ENCODE measurements at regions of chr14 and their contacts with region 1.

Region 1: DNA sequence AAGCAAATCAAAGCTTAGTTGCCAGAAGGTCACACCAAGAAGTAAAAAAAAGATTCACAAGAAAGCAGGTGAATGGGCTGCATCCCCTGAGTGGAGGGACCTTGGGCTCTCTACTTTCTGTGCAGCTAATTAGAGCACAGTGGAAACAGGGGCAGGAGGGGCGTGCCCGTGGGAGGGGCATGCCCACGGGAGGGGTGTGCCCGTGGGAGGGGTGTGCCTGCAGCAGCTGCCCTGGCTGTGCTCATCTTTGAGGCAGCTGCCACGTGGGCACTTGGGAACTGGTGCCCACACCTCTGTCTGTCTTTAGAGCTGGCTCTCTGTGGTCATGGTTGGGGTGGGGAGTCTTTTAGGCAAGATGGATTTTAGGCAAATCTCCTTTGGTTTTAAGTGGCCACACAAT is 60.0 kb downstream of the EML1 start:
- DNase-seq: no peak
- H3K4me3 ChIP-seq: no peak overlapping the region
- H3K27ac ChIP-seq: no peak overlapping the region
- H3K4me1 ChIP-seq: no peaks in the 10 kb centered on the region
- H3K27me3 ChIP-seq: peaks cover 3% of the 10 kb centered on the region
- CTCF ChIP-seq: no peak

Region 2: DNA sequence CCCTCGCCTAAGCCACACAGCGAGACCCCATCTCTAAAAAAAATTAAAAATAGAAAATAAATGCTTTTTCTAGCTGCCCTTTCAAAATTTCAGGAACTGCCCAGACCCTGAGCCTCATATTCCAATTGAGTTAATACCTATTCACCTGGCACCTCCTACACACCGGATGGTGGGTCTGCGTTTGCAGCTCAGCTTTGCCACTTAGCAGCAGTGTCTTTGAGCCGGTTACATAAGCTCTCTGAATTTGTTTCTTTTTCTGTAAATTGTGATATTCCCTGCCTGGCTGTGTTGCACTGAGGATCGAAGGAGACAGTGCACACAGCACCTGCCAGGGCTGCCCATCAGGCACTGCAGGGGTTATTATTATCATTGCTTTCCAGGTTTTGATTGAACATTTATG is 65.6 kb after region 1 on chr14:
- CTCF ChIA-PET with region 1: no interaction called
- dilution Hi-C with region 1: loop called (anchors 5 kb)
- in situ Hi-C with region 1: no loop called
- intact Hi-C with region 1: no loop called
- DNase-seq: no peak
- H3K4me3 ChIP-seq: no peak overlapping the region
- H3K27ac ChIP-seq: no peak overlapping the region
- H3K4me1 ChIP-seq: no peaks in the 10 kb centered on the region
- H3K27me3 ChIP-seq: peaks cover 3% of the 10 kb centered on the region
- CTCF ChIP-seq: no peak

Region 3: GRCh38 chr14:100015251-100015655 is 162.0 kb after region 1 on chr14:
- CTCF ChIA-PET with region 1: no interaction called
- dilution Hi-C with region 1: no loop called
- in situ Hi-C with region 1: no loop called
- intact Hi-C with region 1: no loop called
- DNase-seq: no peak
- H3K4me3 ChIP-seq: no peak overlapping the region
- H3K27ac ChIP-seq: no peak overlapping the region
- H3K4me1 ChIP-seq: no peaks in the 10 kb centered on the region
- H3K27me3 ChIP-seq: no peaks in the 10 kb centered on the region
- CTCF ChIP-seq: no peak

Measured in mammary epithelial cell (primary cell).